Activated CD4-positive, alpha-beta T cell treated with anti-CD3 and anti-CD28 coated beads for 36 hours (primary cell): ENCODE measurements at regions of chr15 and their contacts with region 1.

Region 1: GRCh38 chr15:39756806-39757522 is 25.7 kb downstream of the FSIP1 start:
- DNase-seq: no peak
- ATAC-seq: no peak
- H3K4me3 Mint-ChIP-seq: no peak overlapping the region
- H3K27ac Mint-ChIP-seq: no peak overlapping the region
- H3K4me1 Mint-ChIP-seq: no peaks in the 10 kb centered on the region
- H3K27me3 Mint-ChIP-seq: peaks cover 5% of the 10 kb centered on the region

Region 2: DNA sequence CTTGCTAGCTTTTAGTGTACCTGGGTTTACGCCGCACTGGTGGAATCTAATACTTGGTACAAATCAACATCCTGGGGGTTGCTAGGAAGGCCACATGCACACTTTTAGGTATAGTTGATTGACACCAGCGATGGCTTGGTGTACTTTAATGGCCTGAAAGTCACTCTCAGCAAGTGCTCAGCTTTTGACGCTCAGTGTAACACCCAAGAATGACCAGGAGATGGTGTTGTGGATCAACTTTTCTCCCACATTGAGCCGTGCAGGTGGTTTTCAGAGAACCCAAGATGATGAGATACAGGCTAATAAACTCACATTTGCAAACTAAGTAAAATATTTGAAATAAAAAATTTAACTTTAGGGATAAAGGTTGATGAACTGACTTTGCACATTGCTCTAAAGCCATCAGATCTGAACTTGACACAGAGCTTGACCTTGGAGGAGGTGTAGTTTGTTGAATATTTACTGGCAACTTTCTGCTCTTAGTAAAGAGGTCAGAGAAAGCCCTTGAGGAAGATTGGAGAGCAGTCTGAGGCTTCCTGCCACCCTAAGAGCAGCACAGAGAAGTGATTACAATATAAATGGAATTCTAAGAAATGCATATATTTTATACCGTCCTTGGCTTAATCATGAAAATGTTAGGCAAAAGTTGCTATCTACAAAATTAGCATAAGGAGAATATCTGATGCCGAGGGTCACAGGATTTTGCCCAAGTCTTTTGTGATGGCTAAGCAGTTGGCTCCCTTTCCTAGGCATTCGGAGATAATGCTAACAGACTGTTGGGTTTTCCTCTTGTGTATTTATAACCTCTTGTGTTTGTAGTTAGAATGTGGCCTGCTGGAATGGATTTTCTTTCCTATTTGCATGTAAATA is 1048.9 kb before region 1 on chr15:
- CTCF ChIA-PET with region 1: interaction called, 20 read pairs
- POLR2A ChIA-PET with region 1: no interaction called
- intact Hi-C with region 1: loop called (anchors 5 kb)
- DNase-seq: peak; percentile 48
- ATAC-seq: peak; percentile 91
- H3K4me3 Mint-ChIP-seq: no peak overlapping the region
- H3K27ac Mint-ChIP-seq: no peak overlapping the region
- H3K4me1 Mint-ChIP-seq: peaks cover 7% of the 10 kb centered on the region
- H3K27me3 Mint-ChIP-seq: no peaks in the 10 kb centered on the region

Region 3: DNA sequence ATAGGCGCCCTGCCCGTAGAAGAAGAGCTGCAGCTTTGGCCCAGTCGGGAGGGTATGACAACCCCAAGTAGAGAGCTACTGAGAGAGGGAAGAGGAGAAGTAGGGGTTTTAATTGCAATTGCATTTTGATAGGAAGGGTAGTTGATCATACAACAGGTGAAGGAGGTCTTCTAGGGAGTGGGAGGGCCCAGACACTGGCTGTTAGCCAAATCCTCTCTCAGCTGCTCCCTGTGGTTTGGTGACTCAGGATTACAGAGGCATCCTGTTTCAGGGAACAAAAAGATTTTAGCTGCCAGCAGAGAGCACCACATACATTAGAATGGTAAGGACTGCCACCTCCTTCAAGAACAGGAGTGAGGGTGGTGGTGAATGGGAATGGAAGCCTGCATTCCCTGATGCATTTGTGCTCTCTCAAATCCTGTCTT is 585.0 kb before region 1 on chr15:
- CTCF ChIA-PET with region 1: interaction called, 3 read pairs
- POLR2A ChIA-PET with region 1: no interaction called
- intact Hi-C with region 1: loop called in 1 of 2 experiments (anchors 2 kb)
- DNase-seq: peak; percentile 60
- ATAC-seq: peak; percentile 63
- H3K4me3 Mint-ChIP-seq: no peak overlapping the region
- H3K27ac Mint-ChIP-seq: no peak overlapping the region
- H3K4me1 Mint-ChIP-seq: no peaks in the 10 kb centered on the region
- H3K27me3 Mint-ChIP-seq: peaks cover 21% of the 10 kb centered on the region

Region 4: GRCh38 chr15:39680868-39681267 is 76.1 kb before region 1 on chr15:
- CTCF ChIA-PET with region 1: interaction called, 153 read pairs
- POLR2A ChIA-PET with region 1: no interaction called
- intact Hi-C with region 1: loop called (anchors 1 kb)
- DNase-seq: no peak
- ATAC-seq: no peak
- H3K4me3 Mint-ChIP-seq: no peak overlapping the region
- H3K27ac Mint-ChIP-seq: no peak overlapping the region
- H3K4me1 Mint-ChIP-seq: no peaks in the 10 kb centered on the region
- H3K27me3 Mint-ChIP-seq: no peaks in the 10 kb centered on the region

Region 5: DNA sequence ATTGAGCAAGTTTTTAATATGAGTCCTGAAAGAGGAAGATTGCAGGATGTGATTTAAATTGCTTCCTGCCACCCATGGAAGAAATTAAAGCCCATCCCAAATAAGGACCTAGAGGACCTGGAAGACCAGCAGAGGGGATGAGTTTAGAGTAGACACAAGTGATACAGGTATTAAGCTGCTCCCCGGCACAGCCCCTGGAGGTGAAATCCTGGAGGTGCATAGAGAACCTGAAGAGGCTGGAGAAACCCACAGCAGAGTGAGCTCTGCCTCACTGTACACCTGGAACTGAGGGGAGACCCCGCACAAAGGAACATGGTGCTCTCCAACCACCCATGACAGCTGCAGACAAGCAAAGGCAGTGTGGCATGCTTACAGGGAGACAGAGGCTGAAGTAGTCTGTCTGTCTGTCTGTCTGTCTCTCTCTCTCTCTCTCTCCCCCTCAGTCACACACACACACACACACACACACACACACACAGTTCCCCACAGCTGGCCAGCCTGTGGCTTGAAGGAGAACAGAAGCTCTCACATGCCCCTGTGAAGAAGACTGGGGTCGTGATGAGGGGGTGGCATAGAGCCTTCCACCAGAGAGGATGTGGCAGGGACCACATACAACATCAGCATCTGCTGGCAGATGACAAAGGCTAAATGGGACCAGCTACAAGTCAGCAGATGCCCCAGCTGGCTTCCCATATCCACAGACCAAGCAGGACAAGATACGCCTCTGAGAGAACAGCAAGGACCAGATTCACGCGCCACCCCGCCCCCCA is 12.4 kb before region 1 on chr15:
- CTCF ChIA-PET with region 1: interaction called, 37 read pairs
- POLR2A ChIA-PET with region 1: no interaction called
- intact Hi-C with region 1: no loop called
- DNase-seq: no peak
- ATAC-seq: no peak
- H3K4me3 Mint-ChIP-seq: no peak overlapping the region
- H3K27ac Mint-ChIP-seq: no peak overlapping the region
- H3K4me1 Mint-ChIP-seq: no peaks in the 10 kb centered on the region
- H3K27me3 Mint-ChIP-seq: peaks cover 10% of the 10 kb centered on the region

Region 6: DNA sequence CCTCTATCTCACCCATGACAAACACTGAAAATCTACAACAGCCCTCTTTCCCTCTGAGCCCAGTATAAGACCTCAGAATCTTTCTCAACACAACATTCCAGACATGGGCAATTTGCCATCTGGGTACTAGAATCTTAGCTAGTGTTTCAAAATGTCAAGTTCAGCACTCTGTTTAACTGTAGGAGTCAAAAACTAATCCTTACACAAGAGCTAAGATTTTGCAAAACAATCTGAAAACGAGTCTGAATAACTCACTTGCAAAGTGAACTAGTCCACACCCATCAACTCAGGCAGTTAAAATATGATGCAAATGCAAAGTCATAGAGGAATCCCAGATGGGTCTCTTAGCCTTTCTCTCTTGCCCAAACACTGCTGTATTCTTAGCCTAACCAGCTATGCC is 95.3 kb after region 1 on chr15:
- CTCF ChIA-PET with region 1: no interaction called
- POLR2A ChIA-PET with region 1: no interaction called
- intact Hi-C with region 1: no loop called
- DNase-seq: no peak
- ATAC-seq: no peak
- H3K4me3 Mint-ChIP-seq: no peak overlapping the region
- H3K27ac Mint-ChIP-seq: no peak overlapping the region
- H3K4me1 Mint-ChIP-seq: no peaks in the 10 kb centered on the region
- H3K27me3 Mint-ChIP-seq: peaks cover 7% of the 10 kb centered on the region

Region 7: DNA sequence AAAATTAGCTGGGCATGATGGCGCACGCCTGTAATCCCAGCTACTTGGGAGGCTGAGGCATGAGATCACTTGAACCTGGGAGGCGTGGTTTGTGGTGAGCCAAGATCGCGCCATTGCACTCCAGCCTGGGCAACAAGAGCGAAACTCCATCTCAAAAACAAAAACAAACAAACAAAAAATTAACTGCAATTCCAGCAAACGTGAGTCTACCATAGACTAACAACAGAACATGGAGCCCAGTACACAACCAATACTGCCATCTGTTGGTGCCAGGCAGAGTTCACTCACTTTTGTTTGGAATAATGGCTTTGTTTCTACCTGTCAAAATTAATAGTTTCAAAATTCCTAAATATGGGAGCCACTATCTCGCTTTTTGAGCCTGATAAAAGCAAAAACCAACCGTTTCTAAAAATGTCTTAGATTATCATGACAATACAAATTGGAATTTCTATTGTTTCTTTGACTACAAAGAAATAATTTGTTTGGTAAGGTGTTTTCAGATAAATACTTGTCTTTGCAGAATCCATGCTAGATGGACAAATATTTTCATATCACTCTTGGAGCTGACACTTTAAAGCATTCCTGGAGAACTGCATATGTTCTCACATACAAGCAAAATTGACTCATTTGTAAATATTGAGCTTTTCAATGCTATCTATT is 118.1 kb after region 1 on chr15:
- CTCF ChIA-PET with region 1: interaction called, 10 read pairs
- POLR2A ChIA-PET with region 1: no interaction called
- intact Hi-C with region 1: no loop called
- DNase-seq: peak; percentile 48
- ATAC-seq: no peak
- H3K4me3 Mint-ChIP-seq: no peak overlapping the region
- H3K27ac Mint-ChIP-seq: no peak overlapping the region
- H3K4me1 Mint-ChIP-seq: peaks cover 10% of the 10 kb centered on the region
- H3K27me3 Mint-ChIP-seq: peaks cover 2% of the 10 kb centered on the region